Cardiac septum (tissue), 1 donor: ENCODE measurements at regions of chr1 and their contacts with region 1.

Region 1: DNA sequence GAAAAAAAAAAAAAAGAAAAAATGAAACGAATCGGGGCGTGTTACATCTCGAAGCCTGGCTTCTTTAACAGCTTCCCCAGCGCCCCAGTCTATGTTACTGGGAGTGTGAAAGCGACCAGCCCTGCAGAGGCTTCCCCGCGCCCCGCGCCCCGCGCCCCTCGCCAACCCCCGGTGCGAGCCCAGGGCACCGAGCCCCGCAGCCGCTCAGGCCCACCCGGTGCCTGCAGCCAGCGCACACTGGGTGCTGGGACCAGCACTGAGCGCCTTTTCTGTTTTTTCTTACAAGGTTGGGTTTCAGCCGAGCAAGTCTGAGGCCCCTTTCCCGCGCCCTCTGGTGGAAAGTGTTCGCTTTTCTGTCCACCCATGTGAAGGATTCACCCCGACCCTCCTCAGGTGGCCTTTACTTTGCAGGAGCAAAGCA is 42.1 kb upstream of the ZNF496 start:
- DNase-seq: peak; percentile 71

Region 2: GRCh38 chr1:247046862-247047659 is 326.7 kb before region 1 on chr1:
- intact Hi-C with region 1: loop called (anchors 5 kb)
- DNase-seq: no peak

Region 3: GRCh38 chr1:247331172-247331991 is 42.3 kb before region 1 on chr1 and contains the start of gene ZNF496:
- intact Hi-C with region 1: loop called (anchors 5 kb)
- DNase-seq: peak; percentile 86
- total RNA-seq, gene ZNF496: 17.3 TPM

Region 4: GRCh38 chr1:247769603-247770002 is 395.9 kb after region 1 on chr1:
- intact Hi-C with region 1: no loop called
- DNase-seq: no peak